Aorta (tissue), 5 donors: ENCODE measurements at regions of chr10 and their contacts with region 1.

Region 1: GRCh38 chr10:31318854-31319601 is at the start of gene ZEB1:
- DNase-seq: peak; percentile 91 to 92
- ATAC-seq: peak; percentile 90
- H3K4me3 ChIP-seq: peak within 1 kb of the TSS; percentile 90 to 93
- H3K27ac ChIP-seq: peak within 1 kb of the TSS; percentile 80 to 89
- H3K4me1 ChIP-seq: no peaks in the 10 kb centered on the region
- H3K27me3 ChIP-seq: no peaks in the 10 kb centered on the region
- total RNA-seq, gene ZEB1: 187 to 214 TPM

Region 2: GRCh38 chr10:30783939-30784500 is 535.0 kb before region 1 on chr10:
- intact Hi-C with region 1: loop called (anchors 2 to 5 kb)
- DNase-seq: peak; percentile 92 to 97
- ATAC-seq: peak; percentile 92
- H3K4me3 ChIP-seq: peak overlapping the region; percentile 61 to 83
- H3K27ac ChIP-seq: peak overlapping the region; percentile 90 to 97
- H3K4me1 ChIP-seq: no peaks in the 10 kb centered on the region
- H3K27me3 ChIP-seq: no peaks in the 10 kb centered on the region

Region 3: GRCh38 chr10:31101123-31101522 is 217.9 kb before region 1 on chr10:
- intact Hi-C with region 1: no loop called
- DNase-seq: peak in 1 of 2 donors; percentile 68
- ATAC-seq: peak; percentile 57
- H3K4me3 ChIP-seq: no peak overlapping the region
- H3K27ac ChIP-seq: peak overlapping the region in 1 of 2 donors; percentile 78
- H3K4me1 ChIP-seq: no peaks in the 10 kb centered on the region
- H3K27me3 ChIP-seq: no peaks in the 10 kb centered on the region

Region 4: GRCh38 chr10:31186225-31187000 is 132.6 kb before region 1 on chr10:
- intact Hi-C with region 1: no loop called
- DNase-seq: no peak
- ATAC-seq: no peak
- H3K4me3 ChIP-seq: no peak overlapping the region
- H3K27ac ChIP-seq: no peak overlapping the region
- H3K4me1 ChIP-seq: peaks cover 0 to 2% of the 10 kb centered on the region in 2 donors
- H3K27me3 ChIP-seq: no peaks in the 10 kb centered on the region

Region 5: DNA sequence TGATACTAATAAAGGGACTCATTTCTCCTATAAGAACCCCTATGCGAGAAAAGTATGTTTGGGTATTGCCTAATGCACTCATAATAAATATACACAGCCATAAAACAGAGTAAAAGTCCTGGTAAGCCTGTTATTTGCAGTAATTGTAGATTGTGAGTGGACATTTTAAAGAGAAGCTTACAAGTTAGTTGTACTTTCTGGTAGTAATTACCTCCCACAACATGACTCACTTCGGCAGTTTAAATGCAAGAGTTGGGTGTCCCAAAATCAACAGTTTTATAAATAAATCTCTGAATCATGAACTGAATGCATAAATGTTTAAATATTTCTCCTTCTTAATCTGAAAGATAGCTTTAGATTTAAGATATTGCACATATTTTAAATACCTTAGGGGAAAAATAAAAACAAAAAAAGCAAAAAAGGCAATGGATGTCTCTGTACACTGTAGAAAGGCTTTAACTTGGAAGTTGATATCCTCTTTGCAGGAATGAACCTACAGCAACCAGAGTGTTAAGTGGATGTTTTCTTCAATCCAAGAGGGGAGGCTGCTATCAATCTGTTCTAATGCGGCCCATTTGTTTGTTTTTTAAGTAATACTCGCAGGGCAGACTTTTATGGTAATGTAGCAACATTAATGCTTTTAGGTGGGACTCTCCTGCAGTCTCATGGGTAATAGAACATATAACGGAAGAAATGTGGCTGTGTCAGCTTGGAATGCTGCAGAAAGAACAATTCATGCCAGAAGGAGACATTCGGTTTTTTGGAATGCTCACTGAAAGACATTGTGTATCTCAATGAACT is 57.3 kb before region 1 on chr10:
- intact Hi-C with region 1: loop called in 1 of 2 experiments (anchors 5 kb)
- DNase-seq: no peak
- ATAC-seq: peak; percentile 74
- H3K4me3 ChIP-seq: peak overlapping the region; percentile 11 to 76
- H3K27ac ChIP-seq: peak overlapping the region; percentile 71 to 90
- H3K4me1 ChIP-seq: peaks cover 1 to 3% of the 10 kb centered on the region in 2 donors
- H3K27me3 ChIP-seq: no peaks in the 10 kb centered on the region

Region 6: GRCh38 chr10:31362023-31362641 is 43.1 kb after region 1 on chr10:
- intact Hi-C with region 1: no loop called
- DNase-seq: peak; percentile 36 to 70
- ATAC-seq: no peak
- H3K4me3 ChIP-seq: no peak overlapping the region
- H3K27ac ChIP-seq: no peak overlapping the region
- H3K4me1 ChIP-seq: peaks cover 2 to 7% of the 10 kb centered on the region in 2 donors
- H3K27me3 ChIP-seq: no peaks in the 10 kb centered on the region

Region 7: DNA sequence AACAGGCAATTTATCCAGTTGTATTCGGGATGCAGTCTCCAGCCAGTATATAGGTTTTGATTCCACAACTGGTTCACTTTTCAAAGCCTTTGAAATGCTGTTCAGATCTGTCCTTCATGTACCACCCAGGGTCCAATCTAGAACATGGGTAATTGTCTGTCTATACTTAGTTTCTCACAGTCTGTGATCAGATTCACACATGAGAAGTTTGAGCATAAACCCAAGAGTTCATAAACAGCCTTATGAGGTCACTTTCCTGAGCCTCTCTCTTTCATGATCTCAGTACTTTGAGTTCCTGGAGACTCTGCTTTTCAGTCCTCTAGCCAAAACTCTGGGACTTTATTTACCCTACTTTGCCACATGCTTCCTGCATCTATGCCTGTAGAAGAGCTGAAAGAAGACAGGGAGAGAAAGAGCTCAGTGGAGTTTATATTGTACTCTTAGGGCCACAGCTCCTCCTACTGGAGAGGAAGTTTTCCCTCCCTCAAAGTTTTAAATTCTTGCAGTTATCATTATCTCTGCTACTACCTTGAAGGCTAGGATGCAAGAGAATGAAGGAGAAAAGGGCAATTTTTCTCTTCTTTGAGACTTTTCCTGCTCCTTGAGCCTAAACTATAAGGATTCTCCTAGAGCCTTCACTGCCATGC is 172.0 kb after region 1 on chr10:
- intact Hi-C with region 1: loop called in 1 of 2 experiments (anchors 10 kb)
- DNase-seq: no peak
- ATAC-seq: peak; percentile 22
- H3K4me3 ChIP-seq: no peak overlapping the region
- H3K27ac ChIP-seq: no peak overlapping the region
- H3K4me1 ChIP-seq: no peaks in the 10 kb centered on the region
- H3K27me3 ChIP-seq: no peaks in the 10 kb centered on the region

Region 8: GRCh38 chr10:31759799-31760626 is 441.0 kb after region 1 on chr10:
- intact Hi-C with region 1: loop called in 1 of 2 experiments (anchors 10 kb)
- DNase-seq: peak; percentile 97
- ATAC-seq: peak; percentile 95
- H3K4me3 ChIP-seq: peak overlapping the region; percentile 71 to 74
- H3K27ac ChIP-seq: peak overlapping the region; percentile 17 to 92
- H3K4me1 ChIP-seq: no peaks in the 10 kb centered on the region
- H3K27me3 ChIP-seq: no peaks in the 10 kb centered on the region